Natural killer cell (primary cell): ENCODE measurements at regions of chr14 and their contacts with region 1.

Region 1: DNA sequence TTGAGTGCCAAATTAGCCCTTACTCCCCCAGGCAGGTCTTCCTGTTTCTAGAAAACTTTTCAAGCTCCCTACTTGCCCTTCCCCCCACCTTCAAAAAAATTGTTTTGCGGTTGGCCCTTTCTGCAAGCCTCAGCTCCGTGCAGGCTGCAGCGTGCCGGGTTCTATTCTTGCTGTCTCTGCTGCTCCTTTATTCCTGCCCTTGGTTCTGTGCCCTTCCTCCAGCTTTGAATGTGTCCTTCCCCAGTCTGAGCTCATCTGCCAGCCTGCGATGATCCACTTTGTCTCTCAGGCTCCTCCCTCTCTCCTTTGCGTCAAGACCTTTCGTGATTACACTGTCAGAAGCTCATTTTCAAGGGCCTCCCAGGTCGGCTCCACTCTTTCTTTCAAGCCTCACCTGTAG is 98.6 kb downstream of the IRF2BPL start:
- DNase-seq: peak in 1 of 2 donors; percentile 89
- ATAC-seq: peak; percentile 63 to 74 (median 65)
- H3K4me3 ChIP-seq: no peak overlapping the region
- H3K4me3 Mint-ChIP-seq: peak overlapping the region; percentile 69
- H3K27ac ChIP-seq: no peak overlapping the region
- H3K27ac Mint-ChIP-seq: peak overlapping the region; percentile 6 to 83
- H3K4me1 ChIP-seq: peaks cover 57% of the 10 kb centered on the region
- H3K4me1 Mint-ChIP-seq: peaks cover 58 to 62% of the 10 kb centered on the region in 2 donors
- H3K27me3 ChIP-seq: no peaks in the 10 kb centered on the region
- H3K27me3 Mint-ChIP-seq: no peaks in the 10 kb centered on the region
- CTCF ChIP-seq: no peak

Region 2: DNA sequence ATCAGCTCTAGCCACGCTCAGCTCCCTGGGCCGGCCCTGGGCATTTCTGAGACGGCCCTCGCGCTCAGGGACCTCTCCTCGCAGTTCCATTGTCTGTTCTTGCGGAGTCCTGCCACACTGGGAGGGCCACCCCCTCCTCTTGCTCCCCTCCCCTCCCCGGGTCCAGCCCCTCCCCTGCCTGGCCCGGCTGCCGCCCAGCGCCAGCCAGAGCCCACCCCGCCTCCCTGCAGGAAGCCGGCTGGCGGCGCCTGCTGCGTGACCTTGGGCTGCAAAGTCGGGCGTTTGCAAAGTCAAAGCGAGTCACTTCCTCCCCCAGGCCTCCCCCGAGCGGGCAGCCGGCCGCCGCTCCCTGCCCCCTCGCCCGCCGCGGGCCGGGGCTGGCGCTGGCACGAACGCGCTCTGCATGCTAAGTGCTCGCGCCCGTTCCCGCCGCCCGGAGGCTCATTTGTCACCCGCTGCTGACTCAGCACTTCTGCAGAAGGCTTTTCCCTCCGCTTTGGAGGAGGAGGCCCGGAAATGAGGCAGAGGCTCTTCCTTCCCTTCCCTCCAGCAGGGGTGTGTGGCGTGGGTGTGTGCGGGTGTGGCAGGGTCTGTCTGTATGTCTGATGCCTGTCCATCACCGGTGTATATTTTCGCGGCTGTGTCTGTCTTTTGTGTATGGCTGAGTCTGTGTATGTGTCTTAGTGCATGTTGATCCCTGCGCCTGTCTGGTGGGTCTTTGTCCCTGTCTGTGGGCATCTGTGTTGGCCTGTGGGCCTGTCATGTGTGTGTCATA is 26.6 kb after region 1 on chr14:
- intact Hi-C with region 1: loop called (anchors 2 kb)
- DNase-seq: peak; percentile 86 to 95
- ATAC-seq: peak; percentile 66 to 89 (median 78)
- H3K4me3 ChIP-seq: peak overlapping the region; percentile 49
- H3K4me3 Mint-ChIP-seq: peak overlapping the region; percentile 88
- H3K27ac ChIP-seq: peak overlapping the region; percentile 98
- H3K27ac Mint-ChIP-seq: peak overlapping the region; percentile 96 to 98
- H3K4me1 ChIP-seq: peaks cover 82% of the 10 kb centered on the region
- H3K4me1 Mint-ChIP-seq: peaks cover 43 to 71% of the 10 kb centered on the region in 2 donors
- H3K27me3 ChIP-seq: no peaks in the 10 kb centered on the region
- H3K27me3 Mint-ChIP-seq: no peaks in the 10 kb centered on the region
- CTCF ChIP-seq: no peak